ENCODE measurements at regions of chr10 and their contacts with region 1.

Region 1: GRCh38 chr10:18651324-18652007 is at the start of gene NSUN6:
- DNase-seq: peak; percentile 85
- H3K4me3 Mint-ChIP-seq: peak within 1 kb of the TSS; percentile 94
- H3K27ac Mint-ChIP-seq: peak within 1 kb of the TSS; percentile 94
- H3K4me1 Mint-ChIP-seq: peaks cover 9% of the 10 kb centered on the region
- H3K27me3 Mint-ChIP-seq: no peaks in the 10 kb centered on the region
- CTCF ChIP-seq: no peak
- total RNA-seq, gene NSUN6: 16.0 and 16.2 TPM in 2 replicates

Region 2: DNA sequence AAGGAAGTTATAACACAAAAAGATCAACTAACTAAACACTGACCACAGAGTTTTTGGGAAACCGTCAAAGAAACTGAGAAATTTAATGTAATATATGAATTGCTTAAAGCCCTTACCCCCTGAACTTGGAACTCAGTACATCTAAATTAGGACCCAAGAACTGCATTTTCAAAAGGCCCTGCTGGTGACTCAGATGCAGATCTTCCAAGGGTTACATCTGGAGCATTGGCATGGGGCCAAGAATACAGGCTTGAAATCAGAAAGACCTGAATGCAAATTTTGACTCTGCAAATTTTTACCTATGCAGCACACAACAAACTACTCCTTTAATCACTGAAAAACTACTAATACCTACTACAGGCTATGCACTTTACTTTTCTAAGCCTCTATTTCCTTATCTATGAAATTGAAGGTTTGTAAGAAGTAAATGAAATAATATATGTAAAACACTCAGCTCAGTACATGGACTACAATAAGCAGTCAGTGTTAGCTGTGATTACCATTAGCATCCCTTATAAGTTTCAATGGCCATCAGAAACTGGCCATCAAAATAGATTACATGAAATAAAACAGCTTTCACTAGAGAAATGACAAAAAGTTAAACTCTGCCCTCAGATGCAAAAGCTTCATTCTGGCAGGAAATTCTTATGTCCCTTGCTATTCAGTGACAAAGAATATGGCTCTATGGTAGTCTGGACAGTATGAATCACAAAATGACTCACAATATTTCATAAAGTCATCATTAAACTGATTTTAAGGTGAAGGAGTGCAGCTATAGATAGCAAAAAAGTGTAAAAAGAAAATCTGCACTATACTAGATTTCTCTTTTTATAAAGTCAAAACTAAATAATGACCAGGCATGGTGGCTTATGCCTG is 43.7 kb before region 1 on chr10:
- CTCF ChIA-PET with region 1: no interaction called
- POLR2A ChIA-PET with region 1: interaction called, 5 read pairs
- intact Hi-C with region 1: loop called (anchors 2 kb)
- DNase-seq: peak; percentile 93
- H3K4me3 Mint-ChIP-seq: no peak overlapping the region
- H3K27ac Mint-ChIP-seq: peak overlapping the region; percentile 75
- H3K4me1 Mint-ChIP-seq: peaks cover 24% of the 10 kb centered on the region
- H3K27me3 Mint-ChIP-seq: no peaks in the 10 kb centered on the region
- CTCF ChIP-seq: no peak

Region 3: GRCh38 chr10:18635995-18636394 is 15.5 kb before region 1 on chr10:
- CTCF ChIA-PET with region 1: interaction called, 3 read pairs
- POLR2A ChIA-PET with region 1: interaction called, 24 read pairs
- intact Hi-C with region 1: no loop called
- DNase-seq: no peak
- H3K4me3 Mint-ChIP-seq: no peak overlapping the region
- H3K27ac Mint-ChIP-seq: no peak overlapping the region
- H3K4me1 Mint-ChIP-seq: no peaks in the 10 kb centered on the region
- H3K27me3 Mint-ChIP-seq: no peaks in the 10 kb centered on the region
- CTCF ChIP-seq: no peak

Region 4: GRCh38 chr10:18666810-18667209 is 15.3 kb after region 1 on chr10:
- CTCF ChIA-PET with region 1: interaction called, 3 read pairs
- POLR2A ChIA-PET with region 1: interaction called, 25 read pairs
- intact Hi-C with region 1: no loop called
- DNase-seq: peak; percentile 64
- H3K4me3 Mint-ChIP-seq: peak overlapping the region; percentile 21
- H3K27ac Mint-ChIP-seq: peak overlapping the region; percentile 44
- H3K4me1 Mint-ChIP-seq: peaks cover 27% of the 10 kb centered on the region
- H3K27me3 Mint-ChIP-seq: no peaks in the 10 kb centered on the region
- CTCF ChIP-seq: no peak